ENCODE measurements at regions of chr17 and their contacts with region 1.

Region 1: DNA sequence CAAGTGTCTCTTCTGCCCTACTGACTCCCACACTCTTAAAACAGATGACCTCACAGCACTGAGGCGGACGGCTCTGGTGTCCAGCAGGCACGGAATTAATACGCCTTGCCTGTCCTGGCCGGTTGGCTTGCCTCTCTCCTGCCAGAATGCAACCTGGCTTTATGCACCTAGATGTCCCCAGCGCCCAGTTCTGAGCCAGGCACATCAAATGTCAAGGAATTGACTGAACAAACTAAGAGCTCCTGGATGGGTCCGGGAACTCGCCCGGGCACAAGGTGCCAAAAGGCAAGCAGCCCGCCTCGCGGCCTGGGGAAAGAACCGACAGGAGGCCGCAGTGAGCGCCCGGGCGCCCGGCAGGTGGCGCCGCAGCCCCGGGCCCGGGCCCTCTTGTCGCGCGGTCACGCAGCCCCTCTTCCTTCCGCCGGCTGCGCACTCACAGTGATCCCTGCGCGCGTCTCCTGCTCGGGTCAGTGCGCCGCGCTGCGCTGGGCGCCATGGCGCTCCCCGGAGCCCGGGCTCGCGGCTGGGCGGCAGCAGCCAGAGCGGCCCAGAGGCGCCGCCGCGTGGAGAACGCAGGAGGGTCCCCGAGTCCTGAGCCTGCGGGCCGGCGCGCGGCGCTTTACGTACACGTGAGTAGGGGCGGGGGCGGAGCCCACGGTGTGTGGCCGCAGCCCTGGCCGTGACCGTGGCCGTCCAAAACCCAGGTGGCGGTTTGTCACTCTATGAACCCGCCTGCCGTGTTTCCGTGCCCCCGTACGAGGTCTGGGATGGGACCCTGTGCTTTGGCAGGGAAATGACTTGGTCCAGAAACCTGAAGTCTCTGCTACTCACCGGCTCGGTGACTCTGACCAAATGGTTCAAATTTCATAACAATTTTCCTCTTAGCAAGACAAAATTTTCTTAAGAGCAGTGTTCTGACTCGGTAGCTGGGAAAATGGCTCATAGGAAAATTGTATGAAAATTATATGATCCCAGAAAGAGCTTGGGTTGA is at the start of gene RSAD1:
- DNase-seq: peak; percentile 85 to 96
- ATAC-seq: peak; percentile 78 to 89
- H3K4me3 ChIP-seq: peak within 1 kb of the TSS; percentile 65
- H3K27ac ChIP-seq: peak within 1 kb of the TSS; percentile 79 to 91
- H3K4me1 ChIP-seq: peaks cover 31% of the 10 kb centered on the region
- CTCF ChIP-seq: peak; percentile 100
- EP300 ChIP-seq: no peak
- POLR2A ChIP-seq: peak; percentile 90
- RAD21 ChIP-seq: peak; percentile 41 to 78
- polyA plus RNA-seq, gene RSAD1: 38.2 and 47.2 TPM in 2 replicates

Region 2: GRCh38 chr17:50361561-50362480 is 116.9 kb before region 1 on chr17:
- CTCF ChIA-PET with region 1: interaction called, 18 read pairs
- POLR2A ChIA-PET with region 1: no interaction called
- DNase-seq: peak; percentile 80 to 93
- ATAC-seq: peak; percentile 67 to 81
- H3K4me3 ChIP-seq: no peak overlapping the region
- H3K27ac ChIP-seq: no peak overlapping the region
- H3K4me1 ChIP-seq: peaks cover 3% of the 10 kb centered on the region; the same call in 1 of the 3 replicates
- CTCF ChIP-seq: peak; percentile 71
- EP300 ChIP-seq: no peak
- POLR2A ChIP-seq: no peak
- RAD21 ChIP-seq: peak; percentile 42 to 65; a peak in 4 of 5 replicates

Region 3: DNA sequence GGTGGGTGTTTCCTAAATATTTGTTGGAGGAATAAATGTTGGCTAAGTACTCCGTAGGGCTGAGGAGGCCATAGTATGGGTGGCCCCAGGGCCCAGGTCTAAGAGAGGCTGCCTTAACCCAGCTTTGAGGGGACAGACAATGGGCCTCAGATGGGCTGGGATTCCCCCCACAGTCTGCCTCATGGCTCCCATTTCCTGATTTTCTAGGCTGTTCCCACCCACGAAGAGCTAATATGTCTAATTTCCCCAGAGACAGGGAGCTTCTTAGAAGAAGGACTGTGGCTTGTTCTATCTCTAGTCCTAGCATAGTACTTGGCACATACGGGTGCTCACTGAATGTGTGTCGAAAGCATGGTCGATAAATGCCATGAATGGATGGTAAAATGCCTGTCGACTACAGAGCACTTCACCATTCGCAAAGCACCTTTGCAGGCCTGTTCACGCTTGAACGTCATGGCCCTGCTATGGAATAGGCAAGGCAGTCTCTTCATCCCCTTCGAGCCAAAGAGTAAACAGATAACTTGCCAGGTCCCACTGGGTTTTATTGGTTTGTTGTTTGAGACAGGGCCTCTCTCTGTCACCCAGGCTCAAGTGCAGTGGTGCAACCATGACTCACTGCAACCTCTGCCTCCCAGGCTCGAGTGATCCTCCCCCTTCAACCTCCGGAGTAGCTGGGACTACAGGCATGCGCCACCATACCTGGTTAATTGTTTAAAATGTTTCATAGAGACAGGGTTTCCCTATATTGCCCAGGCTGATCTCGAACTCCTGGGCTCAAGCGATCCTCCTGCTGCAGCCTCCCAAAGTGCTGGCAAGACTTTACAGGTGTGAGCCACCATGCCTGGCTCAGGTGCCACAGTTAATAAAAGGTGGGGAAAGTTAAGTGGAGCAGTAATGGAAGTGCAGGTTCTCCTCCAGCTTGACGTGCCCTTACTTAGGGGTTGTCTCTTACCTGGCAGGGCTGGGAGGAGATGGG is 19.7 kb before region 1 on chr17:
- CTCF ChIA-PET with region 1: interaction called, 238 read pairs
- POLR2A ChIA-PET with region 1: no interaction called
- DNase-seq: peak in 1 of 2 experiments; percentile 48
- ATAC-seq: peak in 1 of 2 experiments; percentile 58; a peak in 3 of 6 replicates
- H3K4me3 ChIP-seq: no peak overlapping the region
- H3K27ac ChIP-seq: no peak overlapping the region
- H3K4me1 ChIP-seq: peaks cover 9% of the 10 kb centered on the region; the same call in 2 of the 3 replicates
- CTCF ChIP-seq: no peak
- EP300 ChIP-seq: no peak
- POLR2A ChIP-seq: no peak
- RAD21 ChIP-seq: no peak

Region 4: GRCh38 chr17:50507871-50508572 is 29.3 kb after region 1 on chr17 and contains the start of gene MYCBPAP:
- CTCF ChIA-PET with region 1: interaction called, 119 read pairs
- POLR2A ChIA-PET with region 1: interaction called, 4 read pairs
- DNase-seq: peak; percentile 81 to 83
- ATAC-seq: peak; percentile 76 to 85
- H3K4me3 ChIP-seq: peak within 1 kb of the TSS; percentile 54
- H3K27ac ChIP-seq: peak within 1 kb of the TSS; percentile 77 to 89
- H3K4me1 ChIP-seq: peaks cover 16% of the 10 kb centered on the region; the same call in 2 of the 3 replicates
- CTCF ChIP-seq: peak; percentile 39
- EP300 ChIP-seq: no peak
- POLR2A ChIP-seq: no peak
- RAD21 ChIP-seq: no peak
- polyA plus RNA-seq, gene MYCBPAP: 2.5 and 4.1 TPM in 2 replicates

Region 5: DNA sequence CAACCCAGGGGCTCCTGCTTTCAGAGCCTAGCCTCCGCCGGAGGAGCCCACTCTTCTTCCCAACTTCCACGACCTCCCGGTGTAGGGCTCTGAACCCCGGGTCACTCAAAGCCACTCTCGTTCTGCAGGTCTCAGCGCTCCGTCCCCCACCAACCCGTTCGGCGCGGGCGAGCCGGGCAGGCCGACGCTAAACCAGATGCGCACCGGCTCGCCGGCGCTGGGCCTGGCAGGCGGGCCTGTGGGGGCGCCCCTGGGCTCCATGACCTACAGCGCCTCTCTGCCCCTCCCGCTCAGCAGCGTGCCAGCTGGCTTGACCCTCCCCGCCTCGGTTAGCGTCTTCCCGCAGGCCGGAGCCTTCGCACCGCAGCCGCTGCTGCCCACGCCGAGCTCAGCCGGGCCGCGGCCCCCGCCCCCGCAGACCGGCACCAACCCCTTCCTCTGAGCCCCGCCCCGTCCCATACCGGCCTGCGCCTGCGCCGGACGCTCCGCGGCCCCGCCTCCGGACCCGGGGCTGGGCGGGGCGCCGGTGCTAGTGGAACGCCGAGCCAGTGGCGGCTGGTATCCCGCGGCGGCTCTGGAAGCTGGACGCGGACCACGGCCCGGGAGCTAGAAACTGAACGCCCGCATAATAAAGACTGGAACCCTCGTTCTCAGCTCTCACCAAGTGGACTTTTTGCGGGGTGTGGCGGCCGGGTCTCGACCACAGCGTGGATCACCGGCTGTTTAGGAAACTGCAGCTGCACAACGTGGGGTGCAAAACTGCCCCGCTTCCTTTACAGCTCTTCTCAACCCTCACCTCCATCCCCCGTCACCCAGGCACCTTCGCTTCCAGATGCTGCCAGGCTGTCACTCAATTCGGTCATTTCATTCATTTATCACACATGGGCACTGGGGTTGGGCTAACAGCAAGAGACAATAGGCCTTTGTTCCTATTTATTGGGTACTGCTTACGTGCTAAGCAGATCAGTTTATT is 63.3 kb after region 1 on chr17:
- CTCF ChIA-PET with region 1: interaction called, 18 read pairs
- POLR2A ChIA-PET with region 1: interaction called, 5 read pairs
- DNase-seq: peak; percentile 80 to 96
- ATAC-seq: peak; percentile 71 to 85
- H3K4me3 ChIP-seq: peak overlapping the region; percentile 51
- H3K27ac ChIP-seq: peak overlapping the region; percentile 85 to 90
- H3K4me1 ChIP-seq: peaks cover 45% of the 10 kb centered on the region
- CTCF ChIP-seq: peak; percentile 28; the same call in 1 of the 3 replicates
- EP300 ChIP-seq: no peak
- POLR2A ChIP-seq: peak; percentile 92
- RAD21 ChIP-seq: peak in 1 of 2 experiments; percentile 22; a peak in 1 of 5 replicates

Region 6: DNA sequence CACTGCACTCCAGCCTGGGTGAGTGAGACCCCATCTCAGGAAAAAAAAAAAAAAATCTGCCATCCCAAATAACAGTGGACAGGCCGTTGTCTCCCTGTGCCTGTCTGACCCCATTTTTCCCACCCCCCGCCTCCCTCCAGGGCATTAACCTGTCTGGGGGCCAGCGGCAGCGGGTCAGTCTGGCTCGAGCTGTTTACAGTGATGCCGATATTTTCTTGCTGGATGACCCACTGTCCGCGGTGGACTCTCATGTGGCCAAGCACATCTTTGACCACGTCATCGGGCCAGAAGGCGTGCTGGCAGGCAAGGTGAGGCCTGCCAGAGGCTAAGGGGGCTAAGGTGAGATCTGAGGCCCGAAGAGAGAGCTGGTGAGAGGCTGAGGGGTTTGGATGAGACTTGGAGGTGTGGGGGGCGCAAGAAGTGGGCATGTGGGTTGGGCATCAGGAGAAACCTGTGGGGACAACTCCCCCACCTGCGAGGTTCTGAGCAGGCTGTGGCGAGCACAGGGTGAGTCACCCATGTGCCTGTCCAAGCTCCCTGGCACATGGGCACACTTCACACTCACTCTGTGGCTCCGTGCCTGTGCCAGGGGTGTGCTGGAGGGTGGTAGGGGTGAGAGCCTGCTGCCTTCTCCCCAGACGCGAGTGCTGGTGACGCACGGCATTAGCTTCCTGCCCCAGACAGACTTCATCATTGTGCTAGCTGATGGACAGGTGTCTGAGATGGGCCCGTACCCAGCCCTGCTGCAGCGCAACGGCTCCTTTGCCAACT is 194.3 kb after region 1 on chr17:
- CTCF ChIA-PET with region 1: no interaction called
- POLR2A ChIA-PET with region 1: no interaction called
- DNase-seq: no peak
- ATAC-seq: peak in 1 of 2 experiments; percentile 17; a peak in 1 of 6 replicates
- H3K4me3 ChIP-seq: no peak overlapping the region
- H3K27ac ChIP-seq: peak overlapping the region; percentile 98
- H3K4me1 ChIP-seq: peaks cover 95% of the 10 kb centered on the region
- CTCF ChIP-seq: no peak
- EP300 ChIP-seq: no peak
- POLR2A ChIP-seq: no peak; the same call in 1 of the 2 replicates
- RAD21 ChIP-seq: no peak

Region 7: DNA sequence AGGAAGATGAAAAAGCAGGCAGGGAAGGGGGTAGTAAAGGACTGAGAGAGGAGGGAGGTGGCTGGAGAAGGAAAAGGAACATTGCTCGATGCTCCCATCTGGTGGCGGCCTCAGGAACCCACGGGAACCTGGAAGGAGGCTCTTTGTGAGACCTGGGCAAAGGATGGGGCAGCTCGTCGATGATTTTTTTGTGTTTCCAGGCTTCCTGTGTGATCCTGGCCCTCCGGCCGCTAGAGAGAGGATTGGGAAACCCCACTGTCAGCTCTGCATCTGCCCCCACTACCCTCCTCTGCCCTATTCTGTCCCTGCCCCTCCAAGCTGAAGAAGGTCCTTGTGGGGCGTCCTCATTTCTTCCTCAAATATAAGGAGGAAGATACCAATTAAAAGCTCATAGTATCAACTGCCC is 363.3 kb after region 1 on chr17:
- CTCF ChIA-PET with region 1: interaction called, 18 read pairs
- POLR2A ChIA-PET with region 1: no interaction called
- DNase-seq: peak; percentile 76 to 94
- ATAC-seq: peak; percentile 85 to 94
- H3K4me3 ChIP-seq: no peak overlapping the region
- H3K27ac ChIP-seq: 0 out of 6 replicates have a peak overlapping the region, but pooled peaks of 1 of the 2 experiments have one; percentile 17
- H3K4me1 ChIP-seq: peaks cover 13% of the 10 kb centered on the region
- CTCF ChIP-seq: peak; percentile 93
- EP300 ChIP-seq: no peak
- POLR2A ChIP-seq: no peak
- RAD21 ChIP-seq: peak; percentile 93 to 94

Measured in A549 (cell line).